Activated CD8-positive, alpha-beta memory T cell treated with anti-CD3 and anti-CD28 coated beads, Interleukin-2, amount 10 ng/mL, durations not matched to agents 7 days and 5 days (primary cell): ENCODE measurements at regions of chr20 and their contacts with region 1.

Region 1: GRCh38 chr20:58294477-58295449 is 14.8 kb upstream of the RAB22A start:
- DNase-seq: no peak
- ATAC-seq: no peak
- H3K4me3 Mint-ChIP-seq: no peak overlapping the region
- H3K27ac Mint-ChIP-seq: no peak overlapping the region
- H3K4me1 Mint-ChIP-seq: no peaks in the 10 kb centered on the region
- H3K27me3 Mint-ChIP-seq: no peaks in the 10 kb centered on the region

Region 2: DNA sequence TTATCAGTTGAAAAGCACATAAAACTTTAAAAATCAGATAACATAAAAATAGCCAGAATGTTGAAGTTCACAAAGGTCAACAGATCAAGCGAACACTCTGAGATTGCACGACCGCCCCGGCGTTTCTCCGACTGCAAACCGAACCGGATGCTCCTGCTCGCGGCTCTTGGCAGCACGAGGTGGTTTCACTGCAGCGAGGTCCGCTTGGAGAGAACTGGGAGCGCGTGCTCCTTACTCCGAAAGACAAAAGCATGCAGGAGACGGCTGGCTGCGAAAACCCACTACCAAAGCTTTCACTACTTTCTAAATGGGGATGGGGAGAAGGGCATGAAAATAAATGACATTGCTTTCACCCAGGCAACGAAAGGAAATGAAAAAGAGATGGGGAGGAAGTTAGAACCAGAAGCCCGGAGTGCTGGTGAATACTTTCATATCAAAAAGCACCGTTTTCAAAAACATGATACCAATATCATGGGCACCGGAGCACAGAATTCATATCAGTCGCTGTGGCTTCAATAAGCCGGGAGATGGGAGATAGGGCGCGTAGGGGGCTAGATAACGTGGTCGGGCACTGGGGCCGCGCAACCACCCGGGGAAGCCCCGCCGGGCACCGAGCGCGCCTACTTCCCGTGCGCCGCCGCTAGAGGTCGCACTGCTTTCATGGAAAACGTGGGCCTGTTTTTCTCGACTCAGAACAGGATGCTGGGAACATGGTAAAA is 58.0 kb before region 1 on chr20:
- CTCF ChIA-PET with region 1: no interaction called
- DNase-seq: peak; percentile 86
- ATAC-seq: peak; percentile 94
- H3K4me3 Mint-ChIP-seq: peak overlapping the region; percentile 76
- H3K27ac Mint-ChIP-seq: peak overlapping the region; percentile 80
- H3K4me1 Mint-ChIP-seq: peaks cover 23% of the 10 kb centered on the region
- H3K27me3 Mint-ChIP-seq: peaks cover 2% of the 10 kb centered on the region

Region 3: DNA sequence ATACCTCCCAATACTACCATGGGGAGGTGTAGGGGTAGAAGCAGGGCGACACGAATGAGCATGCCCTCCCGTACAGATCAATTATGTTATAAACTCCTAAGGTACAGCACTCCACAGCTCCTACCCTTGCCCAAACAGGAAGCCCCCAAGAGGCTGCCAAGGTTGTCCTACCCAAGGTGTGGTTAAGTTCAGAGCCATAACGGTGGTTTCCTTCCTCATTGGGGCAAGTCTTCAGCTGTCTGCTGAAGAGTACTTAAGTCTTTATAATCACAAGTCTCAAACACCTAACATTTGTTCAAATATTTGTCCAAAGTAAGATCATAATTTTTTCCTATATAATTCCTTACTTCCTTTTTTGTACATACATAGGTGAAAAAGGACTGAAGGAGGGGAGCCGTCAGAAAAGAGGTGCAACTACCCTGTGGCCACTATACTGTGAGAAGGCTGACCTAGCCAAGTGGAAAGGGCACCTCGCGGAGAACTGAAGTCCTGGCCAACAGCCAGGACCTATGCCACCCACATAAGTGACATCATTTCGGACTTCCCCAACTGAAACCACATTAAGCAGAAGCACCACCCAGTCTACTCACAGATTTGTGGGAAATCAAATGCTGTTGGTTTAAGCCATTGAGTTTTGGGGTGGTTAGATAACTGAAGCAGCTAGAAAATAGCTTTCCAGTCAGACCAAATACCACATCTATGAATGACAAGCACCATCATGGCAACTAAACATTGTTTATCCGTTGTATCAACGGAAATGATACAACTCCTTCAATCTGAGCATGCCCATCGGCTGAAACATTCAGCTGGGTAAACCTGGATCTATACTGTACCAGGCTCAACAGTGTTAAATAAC is 11.9 kb after region 1 on chr20:
- CTCF ChIA-PET with region 1: interaction called, 10 read pairs
- DNase-seq: peak; percentile 74
- ATAC-seq: peak; percentile 48
- H3K4me3 Mint-ChIP-seq: peak overlapping the region; percentile 58
- H3K27ac Mint-ChIP-seq: peak overlapping the region; percentile 82
- H3K4me1 Mint-ChIP-seq: peaks cover 41% of the 10 kb centered on the region
- H3K27me3 Mint-ChIP-seq: no peaks in the 10 kb centered on the region